ENCODE measurements at regions of chr11 and their contacts with region 1.

Region 1: DNA sequence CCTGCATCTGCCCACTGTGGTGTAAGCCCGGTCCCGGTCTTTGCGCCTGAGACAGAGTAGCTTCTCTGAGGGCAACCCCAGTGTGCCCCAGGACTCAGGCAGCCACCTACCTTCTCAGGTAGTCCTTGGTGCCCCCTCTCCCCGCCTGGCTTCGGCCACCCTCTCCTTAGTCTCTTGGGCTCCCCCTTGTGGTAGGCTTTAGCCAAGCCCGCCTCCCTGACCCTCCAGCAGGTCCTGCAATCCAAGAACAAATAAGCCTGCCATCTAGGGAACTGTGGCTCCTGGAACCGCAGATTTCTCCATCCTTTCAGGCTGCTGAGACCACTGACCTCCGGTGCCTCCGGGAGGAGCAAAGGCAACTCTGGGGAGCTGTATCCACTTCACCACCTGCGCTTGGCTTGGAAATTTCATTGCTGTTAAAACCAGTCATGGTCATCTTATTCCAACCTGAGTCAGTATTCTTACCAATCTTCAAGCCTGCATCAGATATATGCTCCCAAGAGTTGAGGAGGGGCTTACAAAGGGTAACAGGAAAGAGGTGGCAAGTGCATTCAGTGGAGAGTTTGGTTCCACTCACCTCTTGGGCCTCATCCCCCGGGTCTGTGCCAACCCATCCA is 52.8 kb upstream of the TENM4 start:
- DNase-seq: peak; percentile 78
- H3K4me3 Mint-ChIP-seq: no peak overlapping the region
- H3K27ac Mint-ChIP-seq: no peak overlapping the region
- H3K4me1 Mint-ChIP-seq: peaks cover 7% of the 10 kb centered on the region
- H3K27me3 Mint-ChIP-seq: peaks cover 20% of the 10 kb centered on the region
- CTCF ChIP-seq: peak; percentile 89

Region 2: GRCh38 chr11:79393362-79394043 is 100.2 kb before region 1 on chr11:
- CTCF ChIA-PET with region 1: interaction called, 14 read pairs
- POLR2A ChIA-PET with region 1: no interaction called
- intact Hi-C with region 1: no loop called
- DNase-seq: peak; percentile 56
- H3K4me3 Mint-ChIP-seq: no peak overlapping the region
- H3K27ac Mint-ChIP-seq: no peak overlapping the region
- H3K4me1 Mint-ChIP-seq: peaks cover 18% of the 10 kb centered on the region
- H3K27me3 Mint-ChIP-seq: no peaks in the 10 kb centered on the region
- CTCF ChIP-seq: no peak

Region 3: GRCh38 chr11:79400717-79401686 is 92.7 kb before region 1 on chr11:
- CTCF ChIA-PET with region 1: interaction called, 170 read pairs
- POLR2A ChIA-PET with region 1: no interaction called
- intact Hi-C with region 1: loop called (anchors 1 kb)
- DNase-seq: peak; percentile 70
- H3K4me3 Mint-ChIP-seq: no peak overlapping the region
- H3K27ac Mint-ChIP-seq: no peak overlapping the region
- H3K4me1 Mint-ChIP-seq: peaks cover 11% of the 10 kb centered on the region
- H3K27me3 Mint-ChIP-seq: no peaks in the 10 kb centered on the region
- CTCF ChIP-seq: peak; percentile 94

Region 4: DNA sequence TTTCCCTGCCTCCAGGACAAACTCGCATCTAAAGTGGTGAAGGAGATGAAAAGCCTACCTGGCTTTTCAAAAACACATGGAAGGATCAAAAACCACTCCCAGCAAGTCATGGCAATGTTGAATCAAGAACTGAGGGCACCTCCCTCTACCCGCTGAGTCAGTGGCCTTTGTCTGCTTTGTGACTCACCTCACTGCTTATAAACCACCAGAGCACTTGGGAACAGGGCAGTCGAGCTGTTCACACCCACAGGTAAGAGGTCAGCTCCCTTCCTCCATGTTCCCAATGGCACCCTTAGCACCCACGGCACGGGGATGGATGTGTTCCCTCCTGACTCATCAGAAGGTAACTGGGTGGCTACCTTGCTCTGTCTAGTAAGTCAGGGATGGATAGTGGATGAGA is 74.5 kb before region 1 on chr11:
- CTCF ChIA-PET with region 1: interaction called, 19 read pairs
- POLR2A ChIA-PET with region 1: no interaction called
- intact Hi-C with region 1: no loop called
- DNase-seq: peak; percentile 96
- H3K4me3 Mint-ChIP-seq: peak overlapping the region; percentile 16
- H3K27ac Mint-ChIP-seq: peak overlapping the region; percentile 80
- H3K4me1 Mint-ChIP-seq: peaks cover 45% of the 10 kb centered on the region
- H3K27me3 Mint-ChIP-seq: no peaks in the 10 kb centered on the region
- CTCF ChIP-seq: no peak

Region 5: DNA sequence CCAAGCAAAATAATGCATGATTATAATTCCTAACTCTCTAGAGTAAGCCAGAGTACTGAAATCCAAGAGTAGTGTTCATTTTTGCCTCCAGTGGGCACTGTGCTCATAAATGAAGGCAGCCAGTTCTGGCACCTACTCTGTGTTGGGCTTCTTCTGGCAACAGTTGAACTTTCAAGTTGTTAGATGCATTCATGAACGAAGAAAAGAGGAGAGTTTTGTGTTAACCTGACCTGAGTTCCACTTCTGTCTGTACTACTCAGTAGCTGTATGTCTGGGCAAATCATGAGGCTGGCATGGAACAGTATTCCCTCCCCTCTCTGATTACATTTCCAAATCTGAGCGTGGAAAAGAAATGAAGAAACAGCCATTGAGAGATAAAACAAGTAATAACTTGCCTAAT is 32.5 kb before region 1 on chr11:
- CTCF ChIA-PET with region 1: interaction called, 61 read pairs
- POLR2A ChIA-PET with region 1: no interaction called
- intact Hi-C with region 1: loop called (anchors 1 kb)
- DNase-seq: peak; percentile 63
- H3K4me3 Mint-ChIP-seq: peak overlapping the region; percentile 12
- H3K27ac Mint-ChIP-seq: peak overlapping the region; percentile 37
- H3K4me1 Mint-ChIP-seq: peaks cover 6% of the 10 kb centered on the region
- H3K27me3 Mint-ChIP-seq: no peaks in the 10 kb centered on the region
- CTCF ChIP-seq: peak; percentile 51

Region 6: DNA sequence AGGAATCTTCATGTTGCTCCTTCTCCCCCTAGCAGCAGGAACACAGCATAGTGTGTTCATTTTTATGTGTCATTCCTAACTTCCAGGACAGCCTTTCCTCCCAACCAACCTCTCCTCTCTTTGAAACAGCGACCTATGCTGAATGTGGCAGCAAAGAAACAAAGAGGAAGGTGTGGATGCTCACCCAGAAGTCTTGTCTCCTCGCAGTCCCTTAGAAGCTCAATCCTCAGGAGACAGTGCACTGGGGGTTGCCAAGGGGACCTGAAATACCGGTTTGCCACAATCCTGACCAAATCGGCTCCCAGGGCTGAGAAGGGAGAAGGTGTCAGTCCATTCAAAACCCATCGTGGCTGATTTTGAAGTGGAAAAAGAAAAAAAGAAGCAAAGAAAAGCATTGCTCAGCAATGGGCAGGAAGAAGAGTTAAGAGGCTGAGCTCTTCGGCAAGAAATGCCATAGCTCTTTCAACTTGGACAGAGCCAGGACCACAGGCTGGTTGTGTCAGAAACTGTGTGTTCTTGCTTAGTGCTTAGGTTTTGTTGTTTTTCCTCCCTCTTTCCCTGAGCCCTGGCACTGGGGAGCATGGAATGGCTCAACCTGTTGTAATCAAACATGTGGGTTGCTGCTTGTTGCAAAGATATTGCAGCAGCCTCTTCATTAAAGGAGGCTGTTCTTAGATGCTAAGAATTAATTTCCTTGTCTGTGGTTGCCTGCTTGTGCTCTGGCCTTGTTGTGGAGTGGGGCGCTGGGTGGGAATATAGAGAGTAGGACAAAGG is 22.4 kb before region 1 on chr11:
- CTCF ChIA-PET with region 1: interaction called, 21 read pairs
- POLR2A ChIA-PET with region 1: no interaction called
- intact Hi-C with region 1: no loop called
- DNase-seq: no peak
- H3K4me3 Mint-ChIP-seq: no peak overlapping the region
- H3K27ac Mint-ChIP-seq: no peak overlapping the region
- H3K4me1 Mint-ChIP-seq: no peaks in the 10 kb centered on the region
- H3K27me3 Mint-ChIP-seq: no peaks in the 10 kb centered on the region
- CTCF ChIP-seq: no peak

Region 7: DNA sequence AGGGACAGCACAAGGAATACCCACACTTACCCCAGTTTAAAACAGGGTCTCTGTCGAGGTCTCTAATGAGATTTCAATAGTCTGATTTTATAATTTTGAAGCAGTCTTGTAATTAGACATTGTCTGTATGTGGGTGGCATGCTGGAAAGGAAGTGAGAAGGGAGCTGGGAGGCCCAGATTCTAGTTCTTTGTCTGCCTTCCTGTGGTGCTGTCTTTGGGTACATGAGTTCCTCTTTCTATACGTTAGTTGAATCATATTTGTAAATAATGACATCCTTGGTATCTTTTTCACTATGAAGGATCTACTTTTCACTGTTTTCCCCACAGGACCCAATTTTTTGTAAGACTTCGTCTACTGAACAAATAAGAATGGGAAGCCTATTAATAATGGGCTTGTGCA is 10.9 kb before region 1 on chr11:
- CTCF ChIA-PET with region 1: interaction called, 27 read pairs
- POLR2A ChIA-PET with region 1: no interaction called
- intact Hi-C with region 1: no loop called
- DNase-seq: no peak
- H3K4me3 Mint-ChIP-seq: no peak overlapping the region
- H3K27ac Mint-ChIP-seq: no peak overlapping the region
- H3K4me1 Mint-ChIP-seq: no peaks in the 10 kb centered on the region
- H3K27me3 Mint-ChIP-seq: no peaks in the 10 kb centered on the region
- CTCF ChIP-seq: no peak